ENCODE measurements at regions of chr6 and their contacts with region 1.

Region 1: GRCh38 chr6:139291813-139292619 is at the start of gene TXLNB:
- DNase-seq: no peak
- ATAC-seq: 0 out of 2 replicates have a peak, but pooled peaks have one; percentile 31
- H3K4me3 ChIP-seq: no peak within 1 kb of the TSS
- H3K27ac ChIP-seq: no peak within 1 kb of the TSS
- H3K4me1 ChIP-seq: peaks cover 7% of the 10 kb centered on the region
- H3K27me3 ChIP-seq: no peaks in the 10 kb centered on the region
- CTCF ChIP-seq: no peak
- total RNA-seq, gene TXLNB: 0.22 TPM in 1 of 2 replicates, not detected in the other

Region 2: GRCh38 chr6:139335447-139336210 is 43.6 kb after region 1 on chr6:
- CTCF ChIA-PET with region 1: no interaction called
- POLR2A ChIA-PET with region 1: interaction called, 10 read pairs
- intact Hi-C with region 1: no loop called
- DNase-seq: no peak
- ATAC-seq: no peak
- H3K4me3 ChIP-seq: no peak overlapping the region
- H3K27ac ChIP-seq: no peak overlapping the region
- H3K4me1 ChIP-seq: no peaks in the 10 kb centered on the region
- H3K27me3 ChIP-seq: no peaks in the 10 kb centered on the region
- CTCF ChIP-seq: no peak